T-cell (primary cell): ENCODE measurements at regions of chr11 and their contacts with region 1.

Region 1: DNA sequence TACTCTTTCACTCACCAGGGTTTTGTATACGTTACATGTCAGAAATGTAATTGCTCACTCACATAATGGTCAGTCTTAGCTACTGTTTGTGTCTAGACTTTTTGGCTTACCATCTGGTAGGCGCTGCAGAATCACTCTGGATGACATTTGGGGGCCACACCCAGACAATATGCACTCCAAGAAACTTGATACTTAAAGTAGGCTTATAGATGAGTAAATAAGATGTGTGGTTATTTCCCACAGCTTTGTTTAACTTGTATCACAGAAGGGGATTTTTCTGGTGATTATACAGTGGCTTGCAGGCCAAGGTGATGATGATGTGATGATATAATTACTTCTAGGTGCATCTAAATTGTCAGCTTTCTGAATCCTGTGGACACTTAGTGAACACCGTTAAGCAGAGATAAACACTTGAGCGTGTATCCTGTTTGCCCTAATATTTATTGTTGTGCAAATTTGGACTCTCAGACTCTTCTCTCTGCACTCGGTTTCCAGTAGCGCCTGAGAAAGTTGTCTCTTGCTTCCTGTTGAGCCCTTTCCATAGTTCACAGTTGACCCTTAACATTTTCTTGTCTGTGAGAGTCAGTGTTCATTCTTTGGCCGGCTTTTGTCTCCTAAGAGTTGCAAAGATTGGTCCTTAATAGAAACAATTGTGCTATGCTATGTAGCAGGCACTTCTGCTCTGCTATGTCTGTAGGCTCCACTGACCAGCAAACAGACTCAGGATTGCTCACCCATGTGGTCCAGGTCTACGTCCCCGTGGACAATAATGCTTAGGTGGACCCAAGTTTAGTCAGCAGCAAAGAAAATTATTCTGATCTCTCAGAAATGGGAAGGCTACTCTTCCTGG is 89.3 kb downstream of the PRR5L start:
- DNase-seq: peak in 1 of 35 experiments; percentile 51
- ATAC-seq: peak; percentile 51 to 74 (median 58)
- H3K4me3 ChIP-seq: no peak overlapping the region
- H3K4me3 Mint-ChIP-seq: peak overlapping the region in 2 of 3 donors; percentile 11 to 22
- H3K27ac ChIP-seq: peak overlapping the region; percentile 45
- H3K27ac Mint-ChIP-seq: peak overlapping the region; percentile 35 to 84
- H3K4me1 ChIP-seq: peaks cover 0 to 39% of the 10 kb centered on the region in 2 experiments
- H3K4me1 Mint-ChIP-seq: peaks cover 12 to 63% (median 25%) of the 10 kb centered on the region in 3 donors
- H3K27me3 ChIP-seq: no peaks in the 10 kb centered on the region
- H3K27me3 Mint-ChIP-seq: peaks cover 3 to 10% of the 10 kb centered on the region in 2 donors

Region 2: GRCh38 chr11:36431429-36432092 is 46.2 kb after region 1 on chr11:
- CTCF ChIA-PET with region 1: no interaction called
- POLR2A ChIA-PET with region 1: no interaction called
- DNase-seq: peak in 2 of 35 experiments; percentile 24 to 29
- ATAC-seq: peak in 1 of 4 experiments; percentile 81
- H3K4me3 ChIP-seq: no peak overlapping the region
- H3K4me3 Mint-ChIP-seq: peak overlapping the region in 1 of 3 donors; percentile 13
- H3K27ac ChIP-seq: no peak overlapping the region
- H3K27ac Mint-ChIP-seq: peak overlapping the region; percentile 5 to 48
- H3K4me1 ChIP-seq: peaks cover 0 to 23% of the 10 kb centered on the region in 2 experiments
- H3K4me1 Mint-ChIP-seq: peaks cover 0 to 20% (median 9%) of the 10 kb centered on the region in 3 donors
- H3K27me3 ChIP-seq: no peaks in the 10 kb centered on the region
- H3K27me3 Mint-ChIP-seq: peaks cover 0 to 3% of the 10 kb centered on the region in 2 donors

Region 3: GRCh38 chr11:36452236-36452940 is 67.0 kb after region 1 on chr11:
- CTCF ChIA-PET with region 1: interaction called in 1 of 2 experiments, 14 read pairs
- POLR2A ChIA-PET with region 1: no interaction called
- DNase-seq: peak in 9 of 35 experiments; percentile 4 to 31 (median 10)
- ATAC-seq: peak in 3 of 4 experiments; percentile 34 to 58 (median 46)
- H3K4me3 ChIP-seq: no peak overlapping the region
- H3K4me3 Mint-ChIP-seq: peak overlapping the region in 2 of 3 donors; percentile 39 to 51
- H3K27ac ChIP-seq: peak overlapping the region; percentile 41
- H3K27ac Mint-ChIP-seq: peak overlapping the region; percentile 77
- H3K4me1 ChIP-seq: peaks cover 21 to 67% of the 10 kb centered on the region in 2 experiments
- H3K4me1 Mint-ChIP-seq: peaks cover 42 to 59% (median 47%) of the 10 kb centered on the region in 3 donors
- H3K27me3 ChIP-seq: no peaks in the 10 kb centered on the region
- H3K27me3 Mint-ChIP-seq: no peaks in the 10 kb centered on the region